Activated CD4-positive, alpha-beta memory T cell treated with anti-CD3 and anti-CD28 coated beads for 36 hours (primary cell): ENCODE measurements at regions of chr3 and their contacts with region 1.

Region 1: GRCh38 chr3:98039322-98040024 is 4.4 kb upstream of the GABRR3 start:
- DNase-seq: peak; percentile 81
- H3K4me3 Mint-ChIP-seq: peak overlapping the region; percentile 77
- H3K27ac Mint-ChIP-seq: peak overlapping the region; percentile 91
- H3K4me1 Mint-ChIP-seq: peaks cover 13% of the 10 kb centered on the region
- H3K27me3 Mint-ChIP-seq: peaks cover 13% of the 10 kb centered on the region

Region 2: GRCh38 chr3:97481416-97481815 is 558.1 kb before region 1 on chr3:
- CTCF ChIA-PET with region 1: no interaction called
- POLR2A ChIA-PET with region 1: no interaction called
- intact Hi-C with region 1: no loop called
- DNase-seq: no peak
- H3K4me3 Mint-ChIP-seq: no peak overlapping the region
- H3K27ac Mint-ChIP-seq: no peak overlapping the region
- H3K4me1 Mint-ChIP-seq: no peaks in the 10 kb centered on the region
- H3K27me3 Mint-ChIP-seq: no peaks in the 10 kb centered on the region

Region 3: DNA sequence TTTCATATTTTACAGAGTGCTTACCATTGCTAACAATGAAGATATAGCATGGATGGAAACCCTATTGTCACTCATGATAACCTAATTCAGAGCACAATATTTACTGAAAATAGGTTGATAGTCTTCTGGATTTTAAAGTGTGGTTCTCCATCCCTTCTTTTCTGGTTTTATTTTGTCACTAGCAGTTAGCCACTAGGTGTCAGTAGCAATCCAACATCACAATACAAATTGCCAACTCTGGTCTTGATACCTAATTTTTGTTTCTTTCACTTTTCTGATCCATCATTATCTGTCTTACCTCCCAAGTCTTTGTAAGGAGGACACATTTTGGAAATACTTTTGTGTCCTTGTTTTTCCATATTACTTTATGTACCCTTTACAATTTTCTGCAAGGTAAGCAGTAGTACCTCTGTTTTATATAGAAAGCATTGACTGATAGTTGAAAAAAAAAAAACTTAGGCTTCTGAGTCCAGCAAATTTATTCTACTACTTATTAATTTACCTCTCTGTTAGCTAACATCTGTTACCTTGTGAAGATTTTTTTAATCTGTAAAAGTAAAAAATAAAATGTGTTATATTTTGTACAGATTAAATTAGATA is 246.0 kb before region 1 on chr3:
- CTCF ChIA-PET with region 1: interaction called, 3 read pairs
- POLR2A ChIA-PET with region 1: no interaction called
- intact Hi-C with region 1: loop called (anchors 1 kb)
- DNase-seq: no peak
- H3K4me3 Mint-ChIP-seq: no peak overlapping the region
- H3K27ac Mint-ChIP-seq: no peak overlapping the region
- H3K4me1 Mint-ChIP-seq: no peaks in the 10 kb centered on the region
- H3K27me3 Mint-ChIP-seq: no peaks in the 10 kb centered on the region

Region 4: GRCh38 chr3:97910931-97911351 is 128.5 kb before region 1 on chr3:
- CTCF ChIA-PET with region 1: no interaction called
- POLR2A ChIA-PET with region 1: no interaction called
- intact Hi-C with region 1: no loop called
- DNase-seq: no peak
- H3K4me3 Mint-ChIP-seq: peak overlapping the region; percentile 77
- H3K27ac Mint-ChIP-seq: peak overlapping the region; percentile 88
- H3K4me1 Mint-ChIP-seq: peaks cover 28% of the 10 kb centered on the region
- H3K27me3 Mint-ChIP-seq: no peaks in the 10 kb centered on the region

Region 5: GRCh38 chr3:98029083-98029482 is 10.4 kb before region 1 on chr3:
- CTCF ChIA-PET with region 1: interaction called, 43 read pairs
- POLR2A ChIA-PET with region 1: no interaction called
- intact Hi-C with region 1: loop called (anchors 1 kb)
- DNase-seq: no peak
- H3K4me3 Mint-ChIP-seq: no peak overlapping the region
- H3K27ac Mint-ChIP-seq: peak overlapping the region; percentile 65
- H3K4me1 Mint-ChIP-seq: peaks cover 14% of the 10 kb centered on the region
- H3K27me3 Mint-ChIP-seq: no peaks in the 10 kb centered on the region

Region 6: DNA sequence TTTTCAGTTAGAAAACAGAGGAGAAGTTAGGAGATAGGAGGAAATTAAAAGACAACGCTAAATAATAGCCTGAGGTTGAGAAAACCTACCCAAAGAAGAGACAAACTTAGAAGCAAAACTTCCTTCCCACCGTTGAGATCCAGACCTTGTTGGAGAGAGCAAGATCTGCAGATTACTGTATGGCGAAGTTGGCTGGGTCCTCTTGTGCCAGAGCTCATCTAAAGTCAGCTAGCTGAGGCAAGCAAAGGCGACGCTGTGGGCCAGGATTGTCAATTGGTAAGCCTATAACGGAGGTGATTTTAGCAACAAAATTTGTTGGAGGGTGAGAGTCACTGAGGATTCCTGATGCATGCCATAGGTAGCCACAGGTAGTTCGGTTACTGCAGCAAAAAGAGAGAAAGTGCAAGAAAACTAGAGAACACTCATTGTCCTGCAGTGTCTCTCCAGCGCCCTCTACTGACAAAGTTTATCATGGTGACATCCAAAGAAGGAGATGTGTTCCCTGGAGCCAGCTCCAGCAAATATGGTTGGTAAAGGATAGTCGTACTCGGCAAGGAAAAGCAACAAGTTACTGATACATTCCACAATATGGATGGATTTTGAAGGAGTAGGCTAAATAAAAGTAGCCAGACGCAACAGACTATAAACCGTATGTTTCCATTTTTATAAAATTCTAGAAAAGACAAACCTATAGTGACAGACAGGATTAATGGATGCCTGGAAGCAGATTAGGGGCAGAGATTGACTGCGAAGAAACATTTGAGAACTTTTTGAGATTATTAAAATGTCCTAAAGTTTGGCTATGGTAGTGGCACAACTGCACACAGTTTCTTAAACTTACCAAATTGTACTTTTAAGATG is 304.4 kb after region 1 on chr3:
- CTCF ChIA-PET with region 1: interaction called, 12 read pairs
- POLR2A ChIA-PET with region 1: no interaction called
- intact Hi-C with region 1: no loop called
- DNase-seq: peak; percentile 34
- H3K4me3 Mint-ChIP-seq: no peak overlapping the region
- H3K27ac Mint-ChIP-seq: no peak overlapping the region
- H3K4me1 Mint-ChIP-seq: peaks cover 3% of the 10 kb centered on the region
- H3K27me3 Mint-ChIP-seq: no peaks in the 10 kb centered on the region

Region 7: GRCh38 chr3:98359993-98360675 is 320.7 kb after region 1 on chr3:
- CTCF ChIA-PET with region 1: no interaction called
- POLR2A ChIA-PET with region 1: no interaction called
- intact Hi-C with region 1: no loop called
- DNase-seq: peak; percentile 43
- H3K4me3 Mint-ChIP-seq: no peak overlapping the region
- H3K27ac Mint-ChIP-seq: no peak overlapping the region
- H3K4me1 Mint-ChIP-seq: no peaks in the 10 kb centered on the region
- H3K27me3 Mint-ChIP-seq: no peaks in the 10 kb centered on the region

Region 8: DNA sequence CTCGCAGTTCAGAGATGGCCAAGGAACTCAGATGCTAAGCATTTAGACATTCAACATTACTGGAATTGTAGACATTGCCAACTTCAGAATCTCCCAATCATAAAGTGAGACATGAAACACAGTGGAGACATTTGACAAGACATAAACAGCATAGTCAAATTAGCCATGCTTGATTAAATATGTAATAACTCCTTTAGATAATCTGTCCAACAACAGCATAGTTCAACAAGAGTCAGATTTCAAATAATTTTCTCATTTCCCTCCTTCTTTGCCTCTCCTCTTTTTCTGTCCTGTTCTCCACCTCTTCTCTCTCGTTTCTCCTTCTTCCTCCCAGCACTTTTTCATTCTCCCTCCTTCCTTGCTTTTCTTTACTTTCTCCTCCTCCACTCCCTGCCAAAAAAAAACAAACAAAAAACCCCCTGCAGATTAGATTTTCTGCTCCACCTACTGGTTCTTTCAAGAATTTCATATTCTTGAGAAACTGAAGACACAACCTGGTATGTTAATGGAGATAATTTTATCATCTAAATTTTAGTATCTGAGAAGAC is 533.8 kb after region 1 on chr3:
- CTCF ChIA-PET with region 1: interaction called, 4 read pairs
- POLR2A ChIA-PET with region 1: no interaction called
- intact Hi-C with region 1: loop called (anchors 1 kb)
- DNase-seq: no peak
- H3K4me3 Mint-ChIP-seq: no peak overlapping the region
- H3K27ac Mint-ChIP-seq: peak overlapping the region; percentile 66
- H3K4me1 Mint-ChIP-seq: peaks cover 54% of the 10 kb centered on the region
- H3K27me3 Mint-ChIP-seq: no peaks in the 10 kb centered on the region

Region 9: GRCh38 chr3:98817547-98818041 is 778.1 kb after region 1 on chr3:
- CTCF ChIA-PET with region 1: interaction called, 27 read pairs
- POLR2A ChIA-PET with region 1: no interaction called
- intact Hi-C with region 1: loop called (anchors 1 kb)
- DNase-seq: no peak
- H3K4me3 Mint-ChIP-seq: no peak overlapping the region
- H3K27ac Mint-ChIP-seq: no peak overlapping the region
- H3K4me1 Mint-ChIP-seq: no peaks in the 10 kb centered on the region
- H3K27me3 Mint-ChIP-seq: no peaks in the 10 kb centered on the region